ENCODE measurements at regions of chr1 and their contacts with region 1.

Region 1: GRCh38 chr1:153568367-153569099 is 2.9 kb upstream of the S100A2 start:
- DNase-seq: peak; percentile 89 to 92 (median 90)
- ATAC-seq: peak; percentile 81
- H3K4me3 ChIP-seq: no peak overlapping the region
- H3K27ac ChIP-seq: peak overlapping the region; percentile 63; the same call in 2 of the 3 replicates
- H3K4me1 ChIP-seq: peaks cover 38% of the 10 kb centered on the region in 2 experiments
- H3K27me3 ChIP-seq: no peaks in the 10 kb centered on the region
- CTCF ChIP-seq: peak; percentile 97 to 98 (median 98)
- EP300 ChIP-seq: peak; percentile 49; the same call in 1 of the 2 replicates
- POLR2A ChIP-seq: no peak
- RAD21 ChIP-seq: peak; percentile 99

Region 2: DNA sequence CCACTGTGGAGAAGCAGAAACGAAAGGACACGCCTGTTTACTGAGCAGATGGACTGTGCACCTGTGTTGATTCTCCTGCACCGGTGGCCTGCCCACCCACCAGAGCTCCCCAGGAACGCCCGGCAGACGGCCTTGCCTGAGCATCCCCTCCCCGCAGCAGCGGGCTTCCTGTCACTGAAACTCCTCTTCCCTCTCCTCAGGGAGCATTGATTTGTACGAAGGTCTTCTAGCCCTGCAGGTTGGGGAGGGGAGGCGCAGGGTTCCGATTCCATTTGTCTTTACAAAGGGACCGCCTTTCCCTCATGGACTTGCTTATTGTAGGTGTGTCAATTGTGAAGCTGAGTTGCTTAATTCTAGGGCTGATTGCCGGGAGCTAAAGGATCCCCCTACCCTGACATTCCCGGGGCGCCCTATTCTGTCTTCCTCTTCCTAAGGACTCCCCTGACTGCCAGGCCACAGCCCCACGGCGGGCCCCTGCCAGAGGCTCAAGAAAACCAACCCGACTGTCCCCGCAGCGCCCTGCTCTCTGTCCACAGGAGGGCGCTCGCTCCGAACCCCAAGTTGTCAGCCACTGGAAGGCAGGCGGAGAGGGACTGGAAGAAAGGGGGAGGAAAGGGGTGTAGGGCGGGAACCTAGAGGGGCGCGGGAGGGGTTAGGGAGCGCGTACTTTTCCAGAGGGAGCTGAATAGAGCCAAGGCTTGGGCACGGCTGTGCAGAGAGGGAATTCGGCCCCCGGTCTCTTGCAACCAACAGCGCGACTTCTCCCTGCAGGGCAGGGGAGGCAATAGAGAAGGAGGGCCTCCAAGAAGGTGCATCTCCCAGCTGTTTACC is 35.5 kb before region 1 on chr1:
- CTCF ChIA-PET with region 1: interaction called, 21 read pairs
- POLR2A ChIA-PET with region 1: no interaction called
- in situ Hi-C with region 1: loop called (anchors 5 kb)
- intact Hi-C with region 1: loop called (anchors 1 kb)
- DNase-seq: peak; percentile 87 to 92 (median 89)
- ATAC-seq: peak; percentile 94
- H3K4me3 ChIP-seq: no peak overlapping the region
- H3K27ac ChIP-seq: peak overlapping the region; percentile 44; the same call in 2 of the 3 replicates
- H3K4me1 ChIP-seq: peaks cover 38 to 45% of the 10 kb centered on the region in 2 experiments
- H3K27me3 ChIP-seq: no peaks in the 10 kb centered on the region
- CTCF ChIP-seq: peak; percentile 92 to 96 (median 94)
- EP300 ChIP-seq: no peak
- POLR2A ChIP-seq: no peak
- RAD21 ChIP-seq: peak; percentile 90 to 91

Region 3: GRCh38 chr1:153540395-153541361 is 27.9 kb before region 1 on chr1 and contains the start of gene S100A5:
- CTCF ChIA-PET with region 1: interaction called, 5 read pairs
- POLR2A ChIA-PET with region 1: no interaction called
- in situ Hi-C with region 1: no loop called
- intact Hi-C with region 1: loop called (anchors 2 kb)
- DNase-seq: peak in 1 of 4 experiments; percentile 58
- ATAC-seq: no peak
- H3K4me3 ChIP-seq: no peak within 1 kb of the TSS
- H3K27ac ChIP-seq: no peak within 1 kb of the TSS; the same call in 2 of the 3 replicates
- H3K4me1 ChIP-seq: peaks cover 77 to 79% of the 10 kb centered on the region in 2 experiments
- H3K27me3 ChIP-seq: no peaks in the 10 kb centered on the region
- CTCF ChIP-seq: no peak
- EP300 ChIP-seq: no peak
- POLR2A ChIP-seq: no peak
- RAD21 ChIP-seq: no peak
- polyA plus RNA-seq, gene S100A5: 0.67 to 1.4 TPM

Measured in K562 (cell line).